ENCODE measurements at regions of chr7 and their contacts with region 1.

Region 1: DNA sequence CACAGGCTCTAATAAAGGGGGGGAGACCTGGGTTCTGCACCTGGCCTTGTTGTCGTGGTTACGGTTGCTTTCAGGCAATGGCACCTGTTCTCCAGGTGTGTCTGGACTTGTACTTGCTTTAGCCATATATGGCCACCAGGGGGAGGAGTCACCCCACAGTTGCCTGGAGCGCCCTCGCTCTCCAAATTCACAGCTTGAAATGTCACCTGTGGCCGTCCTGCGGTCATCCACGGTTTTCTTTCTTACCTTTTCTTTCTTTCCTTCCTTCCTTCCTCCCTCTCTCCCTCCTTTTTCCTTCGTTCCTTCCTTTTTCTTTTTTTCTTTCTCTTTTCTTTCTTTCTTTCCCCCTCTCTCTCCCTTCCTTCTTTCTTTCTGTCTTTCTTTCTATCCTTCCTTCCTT is 157.2 kb upstream of the ZNF92 start:
- DNase-seq: peak; percentile 52
- ATAC-seq: peak; percentile 83
- H3K4me3 ChIP-seq: no peak overlapping the region
- H3K27ac ChIP-seq: no peak overlapping the region
- H3K4me1 ChIP-seq: peaks cover 10% of the 10 kb centered on the region; the same call in 1 of the 2 replicates
- H3K27me3 ChIP-seq: no peaks in the 10 kb centered on the region
- CTCF ChIP-seq: peak; percentile 82
- EP300 ChIP-seq: no peak
- POLR2A ChIP-seq: no peak
- RAD21 ChIP-seq: peak; percentile 37; the same call in 1 of the 2 replicates

Region 2: GRCh38 chr7:64902806-64903721 is 313.4 kb before region 1 on chr7 and contains the start of gene ZNF273:
- CTCF ChIA-PET with region 1: no interaction called
- POLR2A ChIA-PET with region 1: no interaction called
- in situ Hi-C with region 1: no loop called
- intact Hi-C with region 1: no loop called
- DNase-seq: peak; percentile 91
- ATAC-seq: peak; percentile 99
- H3K4me3 ChIP-seq: peak within 1 kb of the TSS; percentile 93 to 97 (median 95)
- H3K27ac ChIP-seq: peak within 1 kb of the TSS; percentile 65
- H3K4me1 ChIP-seq: peaks cover 51% of the 10 kb centered on the region
- H3K27me3 ChIP-seq: no peaks in the 10 kb centered on the region; a peak in 1 of 5 replicates
- CTCF ChIP-seq: no peak
- EP300 ChIP-seq: no peak
- POLR2A ChIP-seq: peak; percentile 76 to 79
- RAD21 ChIP-seq: no peak
- total RNA-seq, gene ZNF273: 5.8 and 6.8 TPM in 2 replicates

Region 3: DNA sequence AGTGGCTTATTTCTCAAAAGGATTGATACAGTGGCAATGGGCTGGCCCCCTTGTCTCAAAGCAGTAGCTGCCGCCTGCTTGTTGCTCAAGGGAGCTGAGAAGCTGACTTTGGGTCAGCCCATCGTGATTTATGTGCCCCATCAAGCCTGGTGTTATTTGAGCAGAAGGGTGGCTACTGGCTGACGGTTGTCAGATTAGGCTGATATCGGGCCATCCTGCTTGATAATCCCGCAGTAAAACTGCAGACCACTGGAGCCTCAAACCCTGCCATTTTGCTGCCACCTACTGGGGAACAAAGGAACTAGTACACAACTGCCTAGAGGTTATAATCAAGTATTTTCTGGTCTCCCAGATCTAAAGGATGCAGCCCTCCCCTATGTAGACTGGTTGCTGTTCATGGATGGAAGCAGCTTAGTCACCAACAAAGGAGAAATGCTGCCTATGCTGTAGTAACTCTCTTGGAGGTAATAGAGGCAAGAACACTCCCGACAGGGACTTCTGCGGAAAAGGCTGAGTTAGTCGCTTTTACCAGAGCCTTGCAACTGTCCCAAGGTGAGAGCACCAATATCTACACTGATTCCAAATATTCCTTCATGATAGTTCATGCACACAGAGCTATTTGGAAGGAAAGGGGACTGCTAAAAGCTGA is 91.3 kb after region 1 on chr7:
- CTCF ChIA-PET with region 1: interaction called, 21 read pairs
- POLR2A ChIA-PET with region 1: no interaction called
- in situ Hi-C with region 1: loop called (anchors 5 kb)
- intact Hi-C with region 1: loop called (anchors 1 kb)
- DNase-seq: peak; percentile 57
- ATAC-seq: peak; percentile 92
- H3K4me3 ChIP-seq: no peak overlapping the region
- H3K27ac ChIP-seq: no peak overlapping the region
- H3K4me1 ChIP-seq: no peaks in the 10 kb centered on the region
- H3K27me3 ChIP-seq: no peaks in the 10 kb centered on the region
- CTCF ChIP-seq: peak; percentile 91
- EP300 ChIP-seq: no peak
- POLR2A ChIP-seq: no peak
- RAD21 ChIP-seq: peak; percentile 85